ENCODE measurements at regions of chr6 and their contacts with region 1.

Region 1: GRCh38 chr6:43723737-43724295 is 36.2 kb upstream of the MRPS18A start:
- DNase-seq: peak in 1 of 2 donors; percentile 63
- ATAC-seq: peak; percentile 61 to 80 (median 74)
- H3K4me3 ChIP-seq: no peak overlapping the region
- H3K27ac ChIP-seq: no peak overlapping the region
- H3K4me1 ChIP-seq: no peaks in the 10 kb centered on the region
- H3K27me3 ChIP-seq: no peaks in the 10 kb centered on the region
- CTCF ChIP-seq: peak; percentile 37

Region 2: GRCh38 chr6:43687437-43688347 is 36.1 kb before region 1 on chr6 and contains the start of gene MRPS18A:
- intact Hi-C with region 1: no loop called
- DNase-seq: peak; percentile 86 to 92
- ATAC-seq: peak; percentile 97 to 98 (median 98)
- H3K4me3 ChIP-seq: peak within 1 kb of the TSS; percentile 98
- H3K27ac ChIP-seq: peak within 1 kb of the TSS; percentile 87
- H3K4me1 ChIP-seq: peaks cover 43% of the 10 kb centered on the region
- H3K27me3 ChIP-seq: no peaks in the 10 kb centered on the region
- CTCF ChIP-seq: no peak
- total RNA-seq, gene MRPS18A: 64.1 to 152 (median 103) TPM

Region 3: DNA sequence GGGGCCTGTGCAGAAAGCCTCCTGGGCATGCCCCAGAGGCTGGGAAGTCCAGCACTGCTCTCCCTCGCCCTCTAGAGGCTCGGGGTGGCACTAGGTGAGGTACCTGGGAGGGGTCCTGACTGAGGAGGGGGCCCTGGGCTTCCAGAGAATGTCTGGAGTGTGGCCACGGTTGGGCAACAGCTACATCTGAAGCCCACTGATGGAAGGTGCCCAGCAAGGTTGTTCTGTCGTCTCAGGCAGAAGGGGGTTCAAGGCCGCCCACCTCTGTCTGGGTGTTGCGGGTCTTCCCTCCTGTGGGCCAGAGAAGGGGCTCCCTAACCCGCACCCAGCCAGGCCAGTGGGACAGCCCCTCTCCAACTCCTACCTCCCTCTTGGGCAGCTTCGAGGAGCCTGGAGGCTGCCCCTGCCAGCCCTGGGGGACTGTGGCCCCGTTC is 34.8 kb after region 1 on chr6:
- intact Hi-C with region 1: loop called in 1 of 2 experiments (anchors 5 kb)
- DNase-seq: peak in 1 of 2 donors; percentile 66
- ATAC-seq: peak; percentile 78 to 93 (median 86)
- H3K4me3 ChIP-seq: no peak overlapping the region
- H3K27ac ChIP-seq: no peak overlapping the region
- H3K4me1 ChIP-seq: no peaks in the 10 kb centered on the region
- H3K27me3 ChIP-seq: no peaks in the 10 kb centered on the region
- CTCF ChIP-seq: peak; percentile 78

Region 4: GRCh38 chr6:43790025-43790523 is 66.3 kb after region 1 on chr6:
- intact Hi-C with region 1: no loop called
- DNase-seq: peak; percentile 78 to 88
- ATAC-seq: peak in 2 of 4 donors; percentile 8 to 14
- H3K4me3 ChIP-seq: no peak overlapping the region
- H3K27ac ChIP-seq: peak overlapping the region; percentile 71
- H3K4me1 ChIP-seq: peaks cover 15% of the 10 kb centered on the region
- H3K27me3 ChIP-seq: no peaks in the 10 kb centered on the region
- CTCF ChIP-seq: no peak

Region 5: GRCh38 chr6:44161997-44162338 is 438.2 kb after region 1 on chr6:
- intact Hi-C with region 1: no loop called
- DNase-seq: no peak
- ATAC-seq: peak; percentile 38 to 69 (median 51)
- H3K4me3 ChIP-seq: no peak overlapping the region
- H3K27ac ChIP-seq: no peak overlapping the region
- H3K4me1 ChIP-seq: no peaks in the 10 kb centered on the region
- H3K27me3 ChIP-seq: peaks cover 0 to 4% (median 0%) of the 10 kb centered on the region in 3 donors
- CTCF ChIP-seq: no peak